Activated T-helper 2 cell treated with anti-CD3 and anti-CD28 coated beads, Interferon-gamma antibody, Interleukin-2, Interleukin-4, amounts not matched to agents 10 μg/mL and 5 μg/mL and 100 μg/mL, durations not matched to agents 14 hours and 24 hours and 36 hours (primary cell): ENCODE measurements at regions of chr16 and their contacts with region 1.

Region 1: DNA sequence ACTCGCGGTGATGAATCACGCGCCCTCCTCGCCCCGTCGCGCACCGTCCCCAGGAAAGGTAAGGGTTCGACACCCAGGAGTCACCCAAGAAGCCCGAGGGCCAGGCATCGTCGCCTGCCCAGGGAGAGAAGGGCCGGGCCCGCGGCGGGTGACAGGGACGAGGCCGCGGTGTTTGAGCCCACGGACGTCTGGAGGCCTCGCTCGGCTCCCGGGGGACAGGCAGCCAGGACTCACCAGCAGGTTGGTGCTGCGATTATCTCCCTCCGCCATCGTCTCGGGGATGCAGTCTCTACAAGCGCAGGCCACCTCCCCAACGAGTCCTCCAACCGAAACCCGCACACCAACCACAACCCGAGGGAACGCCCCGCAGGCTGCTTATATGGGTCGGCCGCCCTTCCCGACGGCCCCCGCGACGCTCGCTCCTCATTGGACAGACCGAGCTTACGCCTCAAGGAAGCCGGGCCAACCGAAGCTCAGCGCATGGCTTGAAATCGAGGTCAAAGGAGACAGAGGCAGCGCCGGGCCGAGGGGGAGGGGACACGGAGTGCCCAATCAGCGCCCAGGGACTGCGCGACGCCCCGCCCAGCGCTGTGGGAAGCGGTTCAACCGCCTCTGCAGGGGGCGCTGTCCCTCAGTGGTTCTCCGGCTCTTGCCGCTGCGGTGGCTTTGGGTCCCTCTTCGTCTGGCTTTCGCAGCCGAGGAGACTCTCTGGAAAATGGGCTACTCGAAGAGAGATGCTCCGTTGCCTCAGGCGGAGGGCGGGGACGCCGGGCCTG is at the start of gene ARL6IP1:
- DNase-seq: peak; percentile 99
- H3K4me3 Mint-ChIP-seq: peak within 1 kb of the TSS; percentile 93
- H3K27ac Mint-ChIP-seq: peak within 1 kb of the TSS; percentile 98
- H3K4me1 Mint-ChIP-seq: peaks cover 52% of the 10 kb centered on the region
- H3K27me3 Mint-ChIP-seq: no peaks in the 10 kb centered on the region
- total RNA-seq, gene ARL6IP1: 112 TPM in 2 replicates

Region 2: DNA sequence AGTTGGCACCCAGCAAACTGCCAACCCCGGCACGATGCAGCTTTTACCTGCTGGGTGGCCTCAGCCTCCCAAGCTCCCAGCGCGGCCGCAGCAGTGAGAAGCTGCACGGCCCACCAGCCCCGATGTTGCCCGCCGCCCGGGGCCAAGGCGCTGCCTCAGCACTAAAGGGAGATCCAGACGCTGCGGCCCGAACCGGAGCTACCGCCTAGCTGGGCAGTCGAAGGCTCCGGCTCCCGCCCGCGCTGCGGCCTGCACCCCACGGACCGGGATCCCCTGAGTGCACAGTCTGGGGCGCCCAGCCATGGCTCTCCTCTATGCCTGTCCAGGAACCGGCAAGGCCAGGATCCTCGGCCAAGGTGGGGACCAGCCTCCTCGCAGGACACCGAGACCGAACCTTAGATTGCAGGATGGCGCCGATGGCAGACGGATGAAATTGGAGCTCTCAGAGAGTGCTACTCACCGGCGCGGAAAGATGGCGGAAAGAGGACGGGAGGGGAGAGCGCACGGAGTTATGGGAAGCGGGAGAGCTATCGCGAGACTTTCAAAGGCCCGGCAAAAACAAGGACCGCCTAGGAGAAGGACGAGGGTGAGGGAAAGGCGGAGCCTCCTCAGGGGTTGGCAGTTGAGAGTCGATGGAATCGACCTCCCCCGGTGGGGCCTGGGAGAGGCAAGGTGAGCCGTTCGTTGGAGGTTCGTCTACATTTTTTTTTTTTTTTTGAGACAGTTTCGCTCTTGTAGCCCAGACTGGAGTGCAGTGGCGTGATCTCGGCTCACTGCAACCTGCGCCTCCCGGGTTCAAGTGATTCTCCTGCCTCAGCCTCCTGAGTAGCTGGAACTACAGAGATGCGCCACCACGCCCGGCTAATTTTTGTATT is 11.3 kb before region 1 on chr16 and contains the start of gene RPS15A:
- intact Hi-C with region 1: loop called (anchors 1 kb)
- DNase-seq: peak; percentile 93
- H3K4me3 Mint-ChIP-seq: peak within 1 kb of the TSS; percentile 92
- H3K27ac Mint-ChIP-seq: peak within 1 kb of the TSS; percentile 89
- H3K4me1 Mint-ChIP-seq: peaks cover 46% of the 10 kb centered on the region
- H3K27me3 Mint-ChIP-seq: no peaks in the 10 kb centered on the region
- total RNA-seq, gene RPS15A: 1,903 and 1,963 TPM in 2 replicates

Region 3: GRCh38 chr16:18846416-18846815 is 45.0 kb after region 1 on chr16:
- intact Hi-C with region 1: loop called (anchors 5 kb)
- DNase-seq: no peak
- H3K4me3 Mint-ChIP-seq: no peak overlapping the region
- H3K27ac Mint-ChIP-seq: no peak overlapping the region
- H3K4me1 Mint-ChIP-seq: peaks cover 4% of the 10 kb centered on the region
- H3K27me3 Mint-ChIP-seq: no peaks in the 10 kb centered on the region

Region 4: GRCh38 chr16:18969050-18969854 is 167.9 kb after region 1 on chr16:
- intact Hi-C with region 1: loop called (anchors 5 kb)
- DNase-seq: peak; percentile 70
- H3K4me3 Mint-ChIP-seq: peak overlapping the region; percentile 51
- H3K27ac Mint-ChIP-seq: no peak overlapping the region
- H3K4me1 Mint-ChIP-seq: peaks cover 7% of the 10 kb centered on the region
- H3K27me3 Mint-ChIP-seq: peaks cover 3% of the 10 kb centered on the region

Region 5: DNA sequence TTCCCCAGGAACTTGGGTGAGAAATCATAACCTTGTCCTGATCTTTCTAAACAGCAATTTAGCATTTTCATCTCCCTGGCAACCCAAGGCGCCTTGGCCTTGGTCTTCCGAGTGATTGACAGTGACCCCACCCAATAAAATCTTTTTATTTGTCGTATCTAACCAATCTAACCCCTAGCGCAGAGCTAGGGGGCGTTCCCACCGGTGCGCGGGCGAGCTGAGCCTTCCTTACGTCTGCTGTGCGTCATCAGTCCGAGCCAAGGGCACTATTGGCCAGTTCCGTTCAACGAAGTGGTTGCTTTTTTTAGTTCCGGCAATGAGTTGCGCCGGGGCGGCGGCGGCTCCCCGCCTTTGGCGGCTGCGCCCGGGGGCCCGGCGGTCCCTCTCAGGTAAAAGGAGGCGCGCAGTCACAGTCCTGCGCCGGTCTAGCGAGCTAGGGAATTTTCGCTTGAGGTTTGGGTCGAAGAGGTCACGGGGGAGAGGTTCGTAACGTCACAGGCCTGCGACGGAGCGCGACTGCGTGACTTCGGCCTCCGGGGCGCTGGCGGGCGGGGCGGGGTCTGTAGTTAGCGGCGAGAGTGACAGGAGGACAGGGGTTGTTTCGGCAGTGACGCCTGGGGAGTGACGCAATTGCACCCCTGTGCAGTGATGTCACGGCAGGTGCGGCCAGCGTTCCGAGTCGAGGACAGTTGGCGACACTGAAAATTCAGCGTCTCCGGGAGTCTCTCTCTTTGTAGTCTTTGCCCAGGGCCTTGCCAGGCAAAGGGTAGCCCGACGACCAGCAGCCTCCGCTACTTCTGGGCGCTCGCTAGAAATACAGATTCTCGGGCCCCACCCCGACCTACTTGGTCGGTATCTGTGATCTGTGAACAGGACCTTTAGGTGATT is 266.2 kb after region 1 on chr16 and contains the start of gene COQ7:
- intact Hi-C with region 1: loop called (anchors 5 kb)
- DNase-seq: peak; percentile 98
- H3K4me3 Mint-ChIP-seq: peak within 1 kb of the TSS; percentile 88
- H3K27ac Mint-ChIP-seq: peak within 1 kb of the TSS; percentile 88
- H3K4me1 Mint-ChIP-seq: peaks cover 5% of the 10 kb centered on the region
- H3K27me3 Mint-ChIP-seq: no peaks in the 10 kb centered on the region
- total RNA-seq, gene COQ7: 19.5 and 19.7 TPM in 2 replicates

Region 6: DNA sequence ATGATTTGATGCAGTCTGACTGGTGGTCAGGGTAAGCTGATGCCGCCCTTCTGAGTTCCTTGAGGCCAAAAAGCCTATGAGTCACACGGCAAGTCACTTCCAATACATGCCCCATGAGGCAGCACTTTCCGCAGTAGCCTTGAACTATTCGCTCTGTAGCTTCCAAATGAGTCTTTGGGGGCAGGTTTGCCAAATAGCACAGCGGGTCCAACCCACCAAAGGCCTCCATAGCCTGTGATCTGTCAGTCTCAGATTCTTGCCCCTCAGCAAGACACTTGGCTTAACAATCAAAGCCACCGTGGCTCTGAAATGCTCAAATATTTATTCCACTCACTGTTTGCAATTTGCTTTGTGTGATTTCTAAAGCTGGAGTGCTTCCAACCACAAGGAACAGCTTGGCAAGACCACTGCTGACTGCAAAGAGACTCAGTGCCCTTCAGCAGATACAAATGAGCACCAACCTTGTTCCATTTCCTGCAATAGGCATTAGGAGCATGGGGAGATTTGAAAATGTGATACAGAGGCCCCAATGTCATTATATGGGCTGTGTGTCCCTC is 529.5 kb after region 1 on chr16:
- intact Hi-C with region 1: no loop called
- DNase-seq: no peak
- H3K4me3 Mint-ChIP-seq: no peak overlapping the region
- H3K27ac Mint-ChIP-seq: no peak overlapping the region
- H3K4me1 Mint-ChIP-seq: no peaks in the 10 kb centered on the region
- H3K27me3 Mint-ChIP-seq: peaks cover 5% of the 10 kb centered on the region